Stomach (tissue), 19 donors: ENCODE measurements at regions of chr2 and their contacts with region 1.

Region 1: GRCh38 chr2:26942543-26943295 is 27.7 kb upstream of the MAPRE3 start:
- DNase-seq: peak; percentile 72 to 83
- H3K4me3 ChIP-seq: no peak overlapping the region
- H3K27ac ChIP-seq: no peak overlapping the region
- H3K4me1 ChIP-seq: peaks cover 0 to 10% (median 4%) of the 10 kb centered on the region in 4 donors
- H3K27me3 ChIP-seq: peaks cover 0 to 54% (median 17%) of the 10 kb centered on the region in 3 donors
- CTCF ChIP-seq: peak in 5 of 7 experiments; percentile 37 to 84 (median 59)
- EP300 ChIP-seq: no peak
- POLR2A ChIP-seq: no peak

Region 2: DNA sequence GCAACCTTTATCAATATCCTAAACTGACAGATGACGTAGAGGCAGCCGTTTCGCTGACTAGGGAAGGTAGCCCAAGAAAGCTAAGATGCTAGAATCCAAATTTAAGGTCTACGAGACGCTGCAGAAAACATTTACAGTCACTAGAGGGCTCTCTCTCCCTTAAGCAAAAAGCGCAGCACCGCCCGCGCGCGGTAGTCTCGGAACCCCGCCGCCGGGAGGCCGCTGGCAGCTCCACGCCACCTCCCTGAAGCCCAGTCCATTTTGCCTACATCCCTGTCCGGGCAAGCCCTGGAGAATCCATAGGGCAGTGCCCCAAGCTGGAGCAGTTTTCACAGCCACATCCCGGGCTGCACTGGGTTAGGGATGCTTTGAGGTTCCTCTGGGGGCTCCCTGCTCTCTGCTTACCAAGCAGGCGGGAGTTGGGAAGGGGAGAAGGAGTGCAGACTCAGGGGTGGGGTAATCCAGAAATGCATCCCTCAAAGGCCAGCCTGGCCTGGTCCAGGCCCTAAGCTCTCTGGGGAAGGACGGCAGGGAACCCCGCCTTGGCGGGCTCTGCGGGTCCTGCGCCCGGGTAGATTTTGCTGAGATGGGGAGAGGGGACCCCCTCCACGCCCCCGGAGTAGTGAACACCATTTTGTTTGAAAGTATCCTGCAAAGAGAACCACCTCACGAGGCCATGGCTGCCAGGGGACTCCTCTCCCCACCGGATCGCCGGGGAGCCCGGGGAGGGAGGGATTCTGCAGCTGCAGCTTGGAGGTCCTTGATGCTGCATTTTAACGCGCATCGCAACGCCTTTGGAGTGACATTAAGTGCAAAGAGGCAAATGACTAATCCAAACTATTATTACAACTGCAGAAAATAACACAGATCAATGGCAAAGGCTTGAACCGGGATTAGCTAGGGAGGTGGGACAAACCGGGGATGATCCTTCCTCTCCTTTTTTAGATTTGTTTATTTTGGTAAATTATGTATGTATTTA is 96.1 kb before region 1 on chr2:
- intact Hi-C with region 1: loop called (anchors 5 kb)
- DNase-seq: peak; percentile 67 to 89
- H3K4me3 ChIP-seq: no peak overlapping the region
- H3K27ac ChIP-seq: no peak overlapping the region
- H3K4me1 ChIP-seq: peaks cover 32 to 40% (median 37%) of the 10 kb centered on the region in 4 donors
- H3K27me3 ChIP-seq: peaks cover 32 to 98% (median 82%) of the 10 kb centered on the region in 3 donors
- CTCF ChIP-seq: peak in 5 of 7 experiments; percentile 58 to 76 (median 65)
- EP300 ChIP-seq: no peak
- POLR2A ChIP-seq: no peak